IMR-90 (cell line): ENCODE measurements at regions of chr3 and their contacts with region 1.

Region 1: GRCh38 chr3:57778494-57778893 is 22.4 kb downstream of the SLMAP start:
- DNase-seq: peak; percentile 13
- ATAC-seq: no peak
- H3K4me3 ChIP-seq: no peak overlapping the region
- H3K27ac ChIP-seq: no peak overlapping the region
- H3K4me1 ChIP-seq: peaks cover 5% of the 10 kb centered on the region
- H3K27me3 ChIP-seq: no peaks in the 10 kb centered on the region
- CTCF ChIP-seq: no peak
- POLR2A ChIP-seq: no peak
- RAD21 ChIP-seq: no peak

Region 2: DNA sequence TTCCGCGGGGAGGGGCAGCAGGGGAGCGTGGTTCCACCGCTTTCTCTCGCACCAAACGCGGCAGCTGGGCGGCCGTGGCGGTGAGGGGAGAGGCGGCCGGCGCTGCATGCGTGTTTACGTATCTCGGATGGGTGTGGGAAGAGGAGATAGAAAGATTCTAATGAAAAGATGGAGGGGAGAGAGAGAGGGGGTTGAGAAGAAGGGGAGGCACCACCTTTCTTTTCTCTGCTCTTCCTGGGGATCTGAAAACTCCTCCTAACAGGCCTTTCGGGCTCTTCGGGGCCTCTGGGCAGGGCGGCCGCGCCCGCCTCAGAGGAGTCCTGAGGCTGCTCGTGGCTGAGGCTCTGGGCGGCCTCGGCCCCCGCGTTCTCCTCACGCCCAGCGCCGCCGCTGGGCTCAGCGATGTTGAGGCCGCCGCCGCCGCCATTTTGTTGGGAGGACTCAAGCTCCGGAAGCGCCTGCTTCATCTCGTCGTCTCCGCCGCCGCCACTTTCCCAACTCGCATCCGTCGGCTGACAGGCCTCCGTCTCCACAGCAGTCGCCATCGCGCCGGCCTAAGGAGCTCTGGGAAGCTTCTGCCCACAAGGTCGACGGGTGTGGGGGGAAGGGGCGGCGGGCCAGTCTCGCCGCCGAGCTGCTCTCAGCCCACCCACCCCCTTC is 1095.9 kb before region 1 on chr3:
- CTCF ChIA-PET with region 1: no interaction called
- POLR2A ChIA-PET with region 1: interaction called, 12 read pairs
- dilution Hi-C with region 1: no loop called
- in situ Hi-C with region 1: no loop called
- intact Hi-C with region 1: no loop called
- DNase-seq: peak; percentile 70
- ATAC-seq: peak; percentile 81
- H3K4me3 ChIP-seq: peak overlapping the region; percentile 90
- H3K27ac ChIP-seq: peak overlapping the region; percentile 99
- H3K4me1 ChIP-seq: no peaks in the 10 kb centered on the region
- H3K27me3 ChIP-seq: no peaks in the 10 kb centered on the region
- CTCF ChIP-seq: 0 out of 2 replicates have a peak, but pooled peaks have one; percentile 1
- POLR2A ChIP-seq: peak; percentile 88
- RAD21 ChIP-seq: no peak